Activated CD8-positive, alpha-beta T cell treated with anti-CD3 and anti-CD28 coated beads, Interleukin-2, amount 10 ng/mL, durations not matched to agents 7 days and 5 days (primary cell): ENCODE measurements at regions of chr12 and their contacts with region 1.

Region 1: DNA sequence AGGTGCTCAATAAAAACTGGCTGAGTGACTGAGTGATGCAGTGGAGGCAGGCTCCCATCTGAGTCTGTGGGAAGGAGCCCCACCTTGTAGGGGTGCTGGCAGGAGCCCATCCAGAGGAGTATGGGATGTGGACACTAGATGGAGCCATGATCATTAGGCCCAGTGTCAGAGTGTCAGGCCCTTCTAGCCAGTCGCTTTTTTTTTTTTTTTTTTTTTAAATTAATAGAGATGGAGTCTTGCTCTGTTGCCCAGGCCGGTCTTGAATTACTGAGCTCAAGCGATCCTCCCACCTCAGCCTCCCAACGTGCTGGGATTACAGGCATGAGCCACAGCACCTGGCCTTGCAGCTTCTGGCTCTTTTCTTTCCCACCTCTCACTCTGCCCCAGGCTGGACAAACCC is 11.5 kb downstream of the RITA1 start:
- DNase-seq: peak; percentile 79
- ATAC-seq: peak; percentile 97
- H3K4me3 Mint-ChIP-seq: no peak overlapping the region
- H3K27ac Mint-ChIP-seq: no peak overlapping the region
- H3K4me1 Mint-ChIP-seq: peaks cover 10% of the 10 kb centered on the region
- H3K27me3 Mint-ChIP-seq: no peaks in the 10 kb centered on the region

Region 2: DNA sequence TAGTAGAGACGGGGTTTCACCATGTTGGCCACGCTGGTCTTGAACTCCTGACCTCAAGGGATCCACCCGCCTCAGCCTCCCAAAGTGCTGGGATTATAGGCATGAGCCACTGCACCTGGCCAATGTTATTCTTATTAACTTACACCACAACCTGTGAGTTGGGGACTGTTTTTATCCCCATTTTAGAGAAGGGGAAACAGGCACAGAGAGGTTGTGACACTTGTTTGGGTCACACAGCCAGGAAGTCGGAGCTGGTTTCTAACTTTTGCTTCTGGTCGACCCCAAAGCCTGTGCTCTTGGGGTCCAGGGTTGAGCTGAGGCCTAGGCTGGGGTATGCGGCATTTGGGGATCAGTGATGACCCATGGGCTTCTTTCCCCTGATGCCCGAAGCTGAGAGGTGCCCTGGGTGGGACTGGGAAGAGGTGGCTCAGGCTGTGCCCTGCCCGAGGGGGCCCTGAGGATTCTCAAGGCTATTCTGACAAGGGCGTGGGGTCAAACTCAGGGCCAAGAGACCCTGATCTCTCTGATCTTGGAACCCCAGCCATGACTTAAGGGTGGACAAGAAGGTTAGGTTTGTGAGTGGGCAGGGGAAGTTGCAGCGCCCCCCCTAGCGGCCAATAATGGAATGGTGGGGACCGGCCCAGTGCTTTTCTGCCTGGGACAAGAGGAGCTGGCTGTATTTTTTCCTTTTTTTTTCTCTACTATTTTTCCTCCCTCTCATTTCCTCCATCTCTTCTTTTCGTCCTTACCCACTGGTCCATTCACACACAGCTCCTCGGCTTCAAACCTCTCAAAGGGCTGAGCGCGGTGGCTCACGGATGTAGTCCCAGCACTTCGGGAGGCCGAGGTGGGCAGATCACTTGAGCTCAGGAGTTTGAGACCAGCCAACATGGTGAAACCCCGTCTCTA is 228.2 kb after region 1 on chr12:
- CTCF ChIA-PET with region 1: interaction called, 15 read pairs
- POLR2A ChIA-PET with region 1: no interaction called
- DNase-seq: peak; percentile 62
- ATAC-seq: peak; percentile 55
- H3K4me3 Mint-ChIP-seq: no peak overlapping the region
- H3K27ac Mint-ChIP-seq: no peak overlapping the region
- H3K4me1 Mint-ChIP-seq: peaks cover 13% of the 10 kb centered on the region
- H3K27me3 Mint-ChIP-seq: peaks cover 6% of the 10 kb centered on the region